MCF 10A (cell line): ENCODE measurements at regions of chr3 and their contacts with region 1.

Region 1: GRCh38 chr3:4322635-4323034 is 19.5 kb downstream of the SETMAR start:
- DNase-seq: peak; percentile 95
- H3K4me3 Mint-ChIP-seq: no peak overlapping the region
- H3K27ac Mint-ChIP-seq: peak overlapping the region; percentile 71
- H3K4me1 Mint-ChIP-seq: peaks cover 8% of the 10 kb centered on the region
- H3K27me3 Mint-ChIP-seq: no peaks in the 10 kb centered on the region
- CTCF ChIP-seq: no peak

Region 2: GRCh38 chr3:4303187-4304123 is 19.2 kb before region 1 on chr3 and contains the start of gene SETMAR:
- CTCF ChIA-PET with region 1: no interaction called
- POLR2A ChIA-PET with region 1: interaction called, 47 read pairs
- intact Hi-C with region 1: no loop called
- DNase-seq: peak; percentile 90
- H3K4me3 Mint-ChIP-seq: peak within 1 kb of the TSS; percentile 91
- H3K27ac Mint-ChIP-seq: peak within 1 kb of the TSS; percentile 88
- H3K4me1 Mint-ChIP-seq: peaks cover 10% of the 10 kb centered on the region
- H3K27me3 Mint-ChIP-seq: no peaks in the 10 kb centered on the region
- CTCF ChIP-seq: no peak
- total RNA-seq, gene SETMAR: 5.1 and 8.3 TPM in 2 replicates

Region 3: GRCh38 chr3:4504340-4505261 is 182.0 kb after region 1 on chr3:
- CTCF ChIA-PET with region 1: no interaction called
- POLR2A ChIA-PET with region 1: no interaction called
- intact Hi-C with region 1: no loop called
- DNase-seq: peak; percentile 69
- H3K4me3 Mint-ChIP-seq: no peak overlapping the region
- H3K27ac Mint-ChIP-seq: peak overlapping the region; percentile 61
- H3K4me1 Mint-ChIP-seq: peaks cover 19% of the 10 kb centered on the region
- H3K27me3 Mint-ChIP-seq: no peaks in the 10 kb centered on the region
- CTCF ChIP-seq: no peak